T-cell (primary cell): ENCODE measurements at regions of chr2 and their contacts with region 1.

Region 1: DNA sequence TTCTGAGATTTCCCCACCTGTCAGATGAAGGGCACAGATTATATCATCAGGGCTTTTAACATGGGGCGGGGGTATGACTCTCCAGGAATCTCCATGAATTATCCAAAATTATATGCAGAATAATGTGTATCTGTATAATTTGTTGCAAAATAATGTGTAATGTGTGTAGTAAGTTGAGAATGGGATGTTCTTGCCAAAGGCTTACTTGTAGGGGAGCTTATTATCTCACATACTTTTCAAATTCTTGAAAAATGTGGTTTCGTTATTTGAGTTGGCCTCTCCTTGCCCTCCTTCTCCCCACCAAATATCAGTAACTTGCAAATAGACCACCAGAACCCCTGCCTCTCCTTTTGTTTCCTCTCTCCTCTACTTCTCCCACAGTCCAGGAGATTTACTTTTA is 35.6 kb downstream of the UBR3 start:
- DNase-seq: no peak
- ATAC-seq: no peak
- H3K4me3 ChIP-seq: no peak overlapping the region
- H3K4me3 Mint-ChIP-seq: no peak overlapping the region
- H3K27ac ChIP-seq: no peak overlapping the region
- H3K27ac Mint-ChIP-seq: no peak overlapping the region
- H3K4me1 ChIP-seq: no peaks in the 10 kb centered on the region
- H3K4me1 Mint-ChIP-seq: peaks cover 43 to 56% (median 48%) of the 10 kb centered on the region in 3 donors
- H3K27me3 ChIP-seq: no peaks in the 10 kb centered on the region
- H3K27me3 Mint-ChIP-seq: no peaks in the 10 kb centered on the region

Region 2: GRCh38 chr2:169579044-169579443 is 283.8 kb before region 1 on chr2:
- CTCF ChIA-PET with region 1: no interaction called
- POLR2A ChIA-PET with region 1: interaction called in 1 of 2 experiments, 10 read pairs
- DNase-seq: no peak
- ATAC-seq: no peak
- H3K4me3 ChIP-seq: no peak overlapping the region
- H3K4me3 Mint-ChIP-seq: no peak overlapping the region
- H3K27ac ChIP-seq: no peak overlapping the region
- H3K27ac Mint-ChIP-seq: no peak overlapping the region
- H3K4me1 ChIP-seq: peaks cover 0 to 1% of the 10 kb centered on the region in 2 experiments
- H3K4me1 Mint-ChIP-seq: peaks cover 3 to 4% (median 3%) of the 10 kb centered on the region in 3 donors
- H3K27me3 ChIP-seq: no peaks in the 10 kb centered on the region
- H3K27me3 Mint-ChIP-seq: no peaks in the 10 kb centered on the region

Region 3: DNA sequence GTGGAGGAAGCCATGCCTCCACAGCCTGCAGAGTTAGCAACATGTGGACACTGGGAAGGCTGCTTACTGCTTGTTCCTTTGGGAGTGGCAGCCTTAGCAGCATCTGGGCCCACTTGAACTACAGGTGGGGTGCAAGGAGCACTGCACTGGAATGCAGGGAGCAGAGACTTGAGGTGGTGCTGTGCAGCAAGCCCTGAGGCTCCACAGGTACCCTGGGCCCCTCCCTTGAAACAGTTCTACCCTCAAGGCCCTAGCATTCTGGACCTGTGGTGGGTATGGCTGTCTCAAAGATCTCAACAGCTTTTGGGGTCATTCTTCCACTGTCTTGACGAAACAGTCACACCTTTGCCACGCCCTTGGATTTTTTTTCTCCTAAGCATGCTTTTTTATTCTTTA is 22.1 kb before region 1 on chr2:
- CTCF ChIA-PET with region 1: no interaction called
- POLR2A ChIA-PET with region 1: no interaction called
- DNase-seq: no peak
- ATAC-seq: no peak
- H3K4me3 ChIP-seq: no peak overlapping the region
- H3K4me3 Mint-ChIP-seq: no peak overlapping the region
- H3K27ac ChIP-seq: no peak overlapping the region
- H3K27ac Mint-ChIP-seq: no peak overlapping the region
- H3K4me1 ChIP-seq: peaks cover 0 to 4% of the 10 kb centered on the region in 2 experiments
- H3K4me1 Mint-ChIP-seq: peaks cover 60 to 67% (median 60%) of the 10 kb centered on the region in 3 donors
- H3K27me3 ChIP-seq: no peaks in the 10 kb centered on the region
- H3K27me3 Mint-ChIP-seq: no peaks in the 10 kb centered on the region